HEK293 (cell line): ENCODE measurements at regions of chr12 and their contacts with region 1.

Region 1: GRCh38 chr12:107448198-107448597 is 237.4 kb upstream of the PWP1 start:
- H3K4me3 ChIP-seq: no peak overlapping the region
- H3K27ac ChIP-seq: no peak overlapping the region
- H3K4me1 ChIP-seq: no peaks in the 10 kb centered on the region
- CTCF ChIP-seq: no peak

Region 2: GRCh38 chr12:107436376-107436775 is 11.8 kb before region 1 on chr12:
- CTCF ChIA-PET with region 1: interaction called, 15 read pairs
- POLR2A ChIA-PET with region 1: no interaction called
- H3K4me3 ChIP-seq: no peak overlapping the region
- H3K27ac ChIP-seq: no peak overlapping the region
- H3K4me1 ChIP-seq: no peaks in the 10 kb centered on the region
- CTCF ChIP-seq: no peak

Region 3: GRCh38 chr12:107462458-107463332 is 14.5 kb after region 1 on chr12:
- CTCF ChIA-PET with region 1: no interaction called
- POLR2A ChIA-PET with region 1: no interaction called
- H3K4me3 ChIP-seq: no peak overlapping the region
- H3K27ac ChIP-seq: no peak overlapping the region
- H3K4me1 ChIP-seq: no peaks in the 10 kb centered on the region
- CTCF ChIP-seq: no peak